ENCODE measurements at regions of chr6 and their contacts with region 1.

Region 1: GRCh38 chr6:45922728-45923351 is 92.8 kb downstream of the CLIC5 start:
- DNase-seq: peak; percentile 55
- CTCF ChIP-seq: peak; percentile 63

Region 2: DNA sequence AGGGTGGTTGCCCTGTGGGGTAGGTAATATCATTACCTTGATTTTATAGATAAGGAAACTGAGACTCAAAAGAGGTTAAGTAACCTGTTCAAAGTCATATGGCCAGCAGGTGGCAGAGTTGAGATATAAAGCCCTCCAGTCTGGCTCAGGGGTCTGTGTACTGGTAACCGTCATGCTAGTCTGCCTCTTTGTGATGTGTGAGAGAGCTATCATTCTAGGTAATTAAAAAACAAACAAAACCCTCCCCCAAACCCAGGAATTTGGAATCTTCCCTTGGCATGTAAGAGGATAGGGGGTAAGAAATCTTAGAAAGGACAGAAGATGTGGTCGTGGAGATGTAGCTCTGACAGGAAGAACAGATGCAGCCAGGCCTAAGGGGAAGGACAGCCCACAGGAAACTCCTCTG is 1329.3 kb before region 1 on chr6:
- CTCF ChIA-PET with region 1: interaction called, 40 read pairs
- POLR2A ChIA-PET with region 1: no interaction called
- DNase-seq: peak; percentile 53
- CTCF ChIP-seq: peak; percentile 46

Region 3: DNA sequence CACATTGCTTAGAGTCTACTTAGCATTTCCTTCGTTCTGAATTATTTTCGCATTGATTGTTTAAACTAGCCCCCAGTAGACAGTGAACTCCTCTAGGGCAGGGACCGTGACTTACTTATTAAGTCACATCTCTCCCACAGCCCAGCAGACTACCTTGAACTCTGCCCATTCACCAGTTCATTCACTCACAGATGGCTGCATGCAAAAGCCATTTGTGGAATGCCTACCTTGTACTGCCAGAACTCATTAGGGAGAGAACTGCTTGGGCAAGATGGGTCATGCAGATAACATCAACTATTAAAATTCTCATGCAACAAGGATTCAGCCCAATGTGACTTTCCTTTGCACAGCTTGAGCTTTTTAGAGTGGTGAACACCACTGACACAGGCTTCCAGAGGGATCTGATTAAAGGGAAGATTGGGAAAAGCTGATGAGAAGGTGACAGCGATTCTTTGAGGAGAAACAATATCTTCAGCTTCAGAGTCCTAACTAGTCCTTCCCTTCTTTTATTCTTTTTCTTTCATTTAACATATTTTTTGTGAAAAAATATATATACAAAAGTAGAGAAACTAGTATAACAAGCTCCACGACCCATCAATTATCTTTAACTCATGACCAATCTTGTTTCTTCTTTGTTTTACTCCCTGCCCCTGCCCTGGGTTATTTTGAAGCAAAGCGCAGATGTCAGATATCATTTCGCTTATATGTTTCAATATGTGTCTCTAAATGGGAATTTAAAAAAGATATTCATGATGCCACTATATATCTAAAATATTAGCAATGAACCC is 1261.4 kb before region 1 on chr6:
- CTCF ChIA-PET with region 1: interaction called, 120 read pairs
- POLR2A ChIA-PET with region 1: no interaction called
- DNase-seq: no peak
- CTCF ChIP-seq: no peak

Region 4: DNA sequence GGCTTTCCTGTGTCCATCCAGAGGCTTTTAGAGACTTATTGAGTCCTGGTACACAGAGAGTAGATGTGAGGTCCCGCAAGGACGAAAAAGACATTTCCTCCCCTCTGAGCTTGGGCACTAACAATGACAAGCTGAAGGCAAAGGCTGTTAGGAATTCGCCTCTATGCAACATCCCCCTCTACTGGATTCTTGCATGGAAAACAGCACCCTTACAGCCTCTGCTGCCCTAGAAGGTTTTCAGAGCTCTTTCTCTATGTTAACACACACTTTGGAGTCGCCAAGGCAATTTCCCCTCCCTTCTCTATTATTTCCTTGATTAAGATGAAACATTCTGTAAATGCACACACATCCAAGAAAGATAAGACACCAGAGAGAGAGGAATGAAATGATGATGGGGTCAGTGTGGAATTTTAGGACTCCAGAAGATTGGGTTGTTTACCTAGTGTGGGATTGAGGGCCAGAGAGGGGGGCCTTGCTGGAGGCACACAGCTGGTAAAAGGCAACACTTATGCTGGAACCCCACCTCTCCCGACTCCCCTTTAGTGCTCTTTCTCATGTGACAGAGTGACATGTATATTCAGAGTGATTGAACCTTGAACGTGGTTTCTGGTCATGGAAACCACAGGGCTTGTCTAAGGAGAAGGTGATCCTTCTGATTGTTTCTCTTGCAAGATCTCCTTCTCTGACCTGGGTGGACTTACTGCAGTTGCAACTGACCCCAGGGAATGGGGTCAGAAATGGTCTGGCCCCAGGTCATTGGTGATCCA is 207.9 kb before region 1 on chr6:
- CTCF ChIA-PET with region 1: interaction called, 12 read pairs
- POLR2A ChIA-PET with region 1: no interaction called
- DNase-seq: peak; percentile 60
- CTCF ChIP-seq: peak; percentile 66

Measured in GM10248 (cell line).